A549 (cell line): ENCODE measurements at regions of chr11 and their contacts with region 1.

Region 1: DNA sequence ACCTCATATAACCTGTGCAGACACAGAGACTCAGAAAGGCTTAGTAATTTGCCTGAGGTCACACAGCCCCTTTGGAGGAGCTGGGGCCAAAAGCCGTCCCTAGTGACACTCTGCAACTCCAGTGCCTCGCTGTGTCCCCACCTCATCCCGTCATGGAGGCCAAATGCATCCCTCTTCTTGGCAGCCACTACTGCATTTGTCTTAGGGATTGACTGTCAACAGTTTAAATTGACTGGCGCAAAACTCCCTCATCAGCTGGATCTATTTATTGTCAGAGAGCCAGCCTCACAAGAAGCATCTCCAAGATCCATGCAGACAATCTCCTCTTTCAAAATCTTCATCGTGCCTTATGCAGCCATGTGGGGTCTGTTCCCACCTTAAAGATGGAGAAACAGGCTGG is 35.7 kb downstream of the ANO1 start:
- DNase-seq: no peak
- ATAC-seq: no peak
- H3K4me3 ChIP-seq: no peak overlapping the region
- H3K27ac ChIP-seq: no peak overlapping the region
- H3K4me1 ChIP-seq: peaks cover 4% of the 10 kb centered on the region; the same call in 1 of the 3 replicates
- CTCF ChIP-seq: no peak
- EP300 ChIP-seq: no peak
- POLR2A ChIP-seq: no peak
- RAD21 ChIP-seq: no peak

Region 2: GRCh38 chr11:70059715-70060370 is 54.0 kb before region 1 on chr11:
- CTCF ChIA-PET with region 1: no interaction called
- POLR2A ChIA-PET with region 1: interaction called, 11 read pairs
- DNase-seq: no peak
- ATAC-seq: no peak
- H3K4me3 ChIP-seq: no peak overlapping the region
- H3K27ac ChIP-seq: no peak overlapping the region
- H3K4me1 ChIP-seq: no peaks in the 10 kb centered on the region
- CTCF ChIP-seq: no peak
- EP300 ChIP-seq: no peak
- POLR2A ChIP-seq: no peak
- RAD21 ChIP-seq: no peak